ENCODE measurements at regions of chr12 and their contacts with region 1.

Region 1: DNA sequence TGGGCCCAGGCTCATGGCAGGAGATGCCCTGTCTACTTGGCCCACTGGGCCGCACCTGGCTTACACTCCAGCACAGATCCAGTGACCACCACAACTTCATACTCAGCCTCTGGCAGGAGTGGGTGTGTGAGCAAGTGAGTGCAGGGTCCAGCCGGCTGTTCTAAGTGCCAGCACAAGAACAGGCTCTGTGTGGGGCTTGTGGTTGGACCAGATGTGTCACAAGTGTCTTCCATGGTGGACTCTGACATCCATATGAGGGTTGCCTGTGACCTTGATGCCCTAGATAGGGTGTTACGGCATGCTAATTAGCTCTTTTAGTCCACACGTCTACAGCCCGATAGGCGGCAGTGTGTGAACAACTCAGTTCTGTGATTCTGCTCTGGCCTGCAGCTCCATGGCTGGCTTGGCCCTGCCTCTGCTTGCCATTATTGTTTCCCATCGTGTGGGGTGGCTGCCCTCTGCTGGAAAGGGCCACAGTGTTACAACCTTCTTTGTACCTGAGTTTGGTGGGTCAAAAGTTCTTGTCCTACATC is 1089.1 kb downstream of the SLC6A15 start:
- DNase-seq: peak; percentile 67
- H3K4me3 ChIP-seq: no peak overlapping the region
- H3K27ac ChIP-seq: no peak overlapping the region
- H3K4me1 ChIP-seq: no peaks in the 10 kb centered on the region
- H3K27me3 ChIP-seq: no peaks in the 10 kb centered on the region
- CTCF ChIP-seq: peak; percentile 67

Region 2: GRCh38 chr12:82383930-82384552 is 1439.5 kb before region 1 on chr12:
- CTCF ChIA-PET with region 1: no interaction called
- POLR2A ChIA-PET with region 1: no interaction called
- intact Hi-C with region 1: loop called (anchors 10 kb)
- DNase-seq: peak; percentile 33
- H3K4me3 ChIP-seq: no peak overlapping the region
- H3K27ac ChIP-seq: no peak overlapping the region
- H3K4me1 ChIP-seq: no peaks in the 10 kb centered on the region
- H3K27me3 ChIP-seq: no peaks in the 10 kb centered on the region
- CTCF ChIP-seq: peak; percentile 66

Region 3: DNA sequence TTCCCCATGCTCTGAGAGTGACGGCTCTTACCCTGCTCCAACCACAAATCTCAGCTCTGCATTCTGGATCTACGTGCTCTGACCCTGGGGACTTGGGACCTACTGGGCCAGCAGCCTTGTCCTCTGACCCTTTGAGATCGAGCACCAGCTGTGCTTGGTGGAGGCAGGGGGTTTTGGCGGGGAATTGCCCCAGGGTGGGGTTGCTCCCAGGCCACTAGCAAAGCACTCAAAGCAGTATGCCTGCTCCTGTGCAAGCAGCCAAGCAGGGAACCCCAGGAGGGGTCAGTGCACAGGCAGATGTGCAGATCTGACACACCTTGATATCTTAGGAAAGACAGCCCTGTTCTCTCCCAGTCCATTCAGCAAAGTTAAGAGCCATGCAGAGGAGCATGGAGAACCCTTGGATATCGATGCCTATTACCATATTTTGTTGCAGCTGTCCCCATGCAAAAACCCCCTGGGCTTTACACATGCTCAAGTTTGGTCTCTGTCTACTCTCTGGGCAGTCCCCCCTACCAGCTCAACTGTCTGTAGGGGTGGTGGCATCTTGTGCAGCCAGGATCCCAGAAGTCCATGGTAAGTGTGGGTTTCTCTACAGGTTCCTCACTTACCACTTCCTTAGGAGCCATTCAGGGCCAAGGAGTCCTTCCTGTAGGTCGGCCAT is 817.8 kb before region 1 on chr12:
- CTCF ChIA-PET with region 1: no interaction called
- POLR2A ChIA-PET with region 1: no interaction called
- intact Hi-C with region 1: loop called (anchors 2 kb)
- DNase-seq: no peak
- H3K4me3 ChIP-seq: no peak overlapping the region
- H3K27ac ChIP-seq: no peak overlapping the region
- H3K4me1 ChIP-seq: no peaks in the 10 kb centered on the region
- H3K27me3 ChIP-seq: no peaks in the 10 kb centered on the region
- CTCF ChIP-seq: no peak

Region 4: DNA sequence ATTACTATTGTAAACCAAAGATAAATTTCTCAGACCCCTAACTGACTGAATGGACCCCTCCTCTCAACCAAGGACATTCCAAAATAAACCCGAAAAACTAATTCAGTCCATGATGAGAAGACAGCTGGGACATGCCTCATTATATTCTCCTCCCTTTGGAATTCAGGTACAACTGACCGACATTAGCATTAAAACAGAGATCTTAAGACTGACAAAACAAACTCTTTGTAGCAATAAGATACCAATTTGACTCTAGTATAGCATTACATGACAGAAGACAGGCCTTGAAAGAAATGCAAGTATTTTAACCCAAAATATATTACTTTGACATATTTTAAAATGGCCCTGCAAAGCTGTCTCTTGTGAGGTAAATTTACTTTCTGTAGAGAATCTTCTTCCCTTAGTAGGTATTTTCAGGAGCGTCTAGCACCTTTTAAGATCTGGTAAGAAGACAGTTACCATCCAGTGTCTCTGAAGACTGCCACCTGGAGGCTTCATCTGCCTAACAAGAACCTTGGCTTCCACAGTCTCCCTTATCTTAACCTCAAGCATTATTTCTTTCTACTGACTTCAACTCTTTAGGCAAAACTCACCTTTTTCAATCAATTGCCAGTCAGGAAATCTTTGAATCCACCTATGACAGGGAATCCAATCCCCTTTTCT is 131.6 kb after region 1 on chr12:
- CTCF ChIA-PET with region 1: no interaction called
- POLR2A ChIA-PET with region 1: no interaction called
- intact Hi-C with region 1: loop called (anchors 10 kb)
- DNase-seq: no peak
- H3K4me3 ChIP-seq: no peak overlapping the region
- H3K27ac ChIP-seq: no peak overlapping the region
- H3K4me1 ChIP-seq: no peaks in the 10 kb centered on the region
- H3K27me3 ChIP-seq: no peaks in the 10 kb centered on the region
- CTCF ChIP-seq: 0 out of 2 replicates have a peak, but pooled peaks have one; percentile 26

Region 5: GRCh38 chr12:84502907-84503787 is 679.6 kb after region 1 on chr12:
- CTCF ChIA-PET with region 1: interaction called, 8 read pairs
- POLR2A ChIA-PET with region 1: no interaction called
- intact Hi-C with region 1: loop called (anchors 2 kb)
- DNase-seq: peak; percentile 74
- H3K4me3 ChIP-seq: no peak overlapping the region
- H3K27ac ChIP-seq: no peak overlapping the region
- H3K4me1 ChIP-seq: peaks cover under 1% of the 10 kb centered on the region
- H3K27me3 ChIP-seq: no peaks in the 10 kb centered on the region
- CTCF ChIP-seq: peak; percentile 76